PC-3 (cell line): ENCODE measurements at regions of chr7 and their contacts with region 1.

Region 1: DNA sequence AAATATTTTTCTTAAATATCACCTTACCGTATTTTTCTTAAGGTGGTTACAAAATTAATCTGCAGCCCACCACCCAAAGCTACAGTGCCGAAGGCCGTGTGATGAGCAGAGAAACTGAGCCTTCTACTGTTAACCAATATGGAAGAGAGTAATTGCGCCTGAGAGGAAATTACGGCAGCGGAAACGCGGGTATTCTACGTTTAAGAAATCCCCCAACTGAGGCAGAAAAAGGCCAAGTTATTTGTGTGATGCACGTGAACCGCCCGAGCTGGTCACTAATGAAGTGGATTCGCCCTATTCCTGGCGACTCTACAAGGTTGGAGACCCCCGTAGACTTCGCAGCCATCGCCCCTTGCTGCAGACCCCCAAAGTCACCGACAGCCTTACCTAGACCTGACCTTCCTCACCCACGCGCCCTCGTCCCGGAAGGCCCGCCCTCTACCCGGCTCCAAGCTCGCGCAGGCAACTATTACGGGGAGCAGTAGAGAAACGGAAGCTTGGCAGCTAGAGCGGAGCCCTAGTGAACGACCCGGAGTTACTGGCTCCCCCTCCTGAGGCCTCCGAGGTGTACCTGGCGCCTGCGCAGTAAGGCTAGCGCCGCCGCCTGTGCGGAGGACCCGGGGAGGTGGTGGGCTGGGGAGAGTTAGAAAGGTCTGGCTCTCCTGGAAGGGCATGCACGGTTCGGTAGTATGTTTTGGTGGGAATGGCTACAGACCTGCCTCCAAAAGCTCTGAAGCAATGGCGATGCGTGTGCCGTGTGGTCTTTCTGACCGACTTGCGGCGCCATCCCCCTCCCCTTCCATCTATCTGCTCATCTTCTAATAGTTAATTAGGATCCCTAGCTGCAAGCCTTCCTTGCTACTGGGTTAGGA is at the start of gene MRPS33:
- DNase-seq: peak; percentile 97
- ATAC-seq: peak; percentile 97
- H3K4me3 ChIP-seq: peak within 1 kb of the TSS; percentile 79
- H3K27ac ChIP-seq: peak within 1 kb of the TSS; percentile 43
- H3K4me1 ChIP-seq: peaks cover 16% of the 10 kb centered on the region
- H3K27me3 ChIP-seq: peaks cover 16% of the 10 kb centered on the region; the same call in 1 of the 2 replicates
- CTCF ChIP-seq: peak; percentile 77
- total RNA-seq, gene MRPS33: 38.5 and 57.1 TPM in 2 replicates

Region 2: DNA sequence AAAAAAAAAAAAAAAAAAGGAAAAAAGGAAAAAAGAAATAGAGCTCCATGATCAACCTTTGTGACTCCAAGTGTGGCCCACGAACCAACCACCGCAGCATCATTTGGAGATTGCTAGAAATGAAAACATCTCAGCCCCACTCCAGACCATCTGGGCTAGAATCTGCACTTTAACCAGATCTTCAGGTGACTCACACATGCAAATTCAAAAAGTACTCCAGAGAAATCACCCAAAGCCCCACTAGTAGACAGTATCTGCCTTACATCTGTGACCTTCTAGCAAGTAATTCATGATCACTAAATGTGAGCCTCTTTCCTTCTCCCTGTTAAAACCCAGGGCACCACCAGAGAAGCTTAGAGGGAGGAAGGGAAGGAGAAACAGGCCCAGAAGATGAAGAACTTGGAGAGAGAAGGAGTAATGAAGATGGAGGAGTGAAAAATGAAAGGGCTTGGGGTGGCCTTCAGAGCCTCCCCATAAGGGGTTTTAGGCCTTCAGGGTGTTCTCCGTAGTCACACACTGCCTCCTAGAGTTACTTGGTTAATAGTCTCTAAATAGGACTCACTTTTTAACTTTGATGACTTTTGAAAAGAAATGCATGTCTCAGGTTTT is 710.5 kb before region 1 on chr7:
- CTCF ChIA-PET with region 1: interaction called, 15 read pairs
- POLR2A ChIA-PET with region 1: no interaction called
- intact Hi-C with region 1: no loop called
- DNase-seq: peak; percentile 22
- ATAC-seq: peak; percentile 48
- H3K4me3 ChIP-seq: no peak overlapping the region
- H3K27ac ChIP-seq: no peak overlapping the region
- H3K4me1 ChIP-seq: no peaks in the 10 kb centered on the region
- H3K27me3 ChIP-seq: no peaks in the 10 kb centered on the region
- CTCF ChIP-seq: peak; percentile 44; the same call in 1 of the 2 replicates

Region 3: DNA sequence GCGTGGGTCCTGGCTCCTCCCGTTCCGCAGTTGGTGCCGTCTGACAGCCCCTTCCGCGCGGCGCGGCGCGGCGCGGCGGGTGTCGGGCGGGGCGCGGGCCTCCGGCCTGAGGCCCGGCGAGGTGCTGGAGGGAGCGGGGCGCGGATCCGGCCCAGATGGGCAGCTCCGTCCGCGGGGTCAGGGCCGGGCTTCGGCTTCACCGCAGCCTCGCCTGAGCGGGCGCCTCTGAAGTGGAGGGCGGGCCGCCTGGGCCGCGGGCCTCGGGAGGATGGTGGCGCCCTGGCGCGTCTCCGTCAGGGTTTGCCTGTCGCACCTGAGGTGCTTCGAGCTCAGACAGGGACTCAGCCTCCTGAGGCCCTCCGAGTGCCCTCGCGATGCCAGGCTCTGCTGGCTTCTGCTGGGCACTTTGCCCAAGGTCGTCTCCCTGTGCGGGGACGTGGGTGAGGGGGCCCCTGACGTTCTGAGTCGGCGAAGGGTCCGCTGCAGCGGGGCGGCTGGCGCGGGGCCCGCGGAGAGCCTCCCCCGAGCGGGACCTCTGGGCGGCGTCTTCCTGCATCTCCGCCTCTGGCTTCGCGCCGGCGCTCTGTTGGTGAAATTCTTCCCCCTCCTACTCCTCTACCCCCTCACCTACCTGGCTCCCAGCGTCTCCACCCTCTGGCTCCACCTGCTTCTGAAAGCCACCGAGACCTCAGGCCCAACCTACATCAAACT is 341.5 kb before region 1 on chr7:
- CTCF ChIA-PET with region 1: interaction called, 3 read pairs
- POLR2A ChIA-PET with region 1: no interaction called
- intact Hi-C with region 1: loop called (anchors 2 kb)
- DNase-seq: peak; percentile 82
- ATAC-seq: peak; percentile 71
- H3K4me3 ChIP-seq: peak overlapping the region; percentile 71
- H3K27ac ChIP-seq: peak overlapping the region; percentile 33; the same call in 1 of the 2 replicates
- H3K4me1 ChIP-seq: peaks cover 25% of the 10 kb centered on the region
- H3K27me3 ChIP-seq: no peaks in the 10 kb centered on the region
- CTCF ChIP-seq: no peak; the same call in 1 of the 2 replicates

Region 4: DNA sequence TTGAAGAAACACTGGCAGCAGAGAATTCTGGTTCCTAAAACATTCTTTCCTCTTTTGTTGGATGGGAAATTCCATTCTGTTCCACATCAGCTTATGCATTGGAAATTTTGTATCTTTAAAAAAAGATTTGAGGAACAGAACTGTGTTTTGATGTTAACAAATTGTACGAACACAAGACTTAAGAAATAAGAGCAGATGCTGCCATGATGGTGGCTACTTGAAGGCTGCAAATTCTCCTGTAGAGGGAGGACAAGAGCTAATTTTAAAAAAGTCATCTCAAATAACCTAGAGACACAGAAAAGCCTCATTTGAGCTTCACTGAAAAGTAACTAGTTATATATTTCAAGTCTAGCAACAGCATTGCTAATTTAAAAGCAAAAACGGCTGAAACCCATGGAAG is 288.5 kb before region 1 on chr7:
- CTCF ChIA-PET with region 1: no interaction called
- POLR2A ChIA-PET with region 1: interaction called, 8 read pairs
- intact Hi-C with region 1: loop called (anchors 1 kb)
- DNase-seq: peak; percentile 34
- ATAC-seq: peak; percentile 67
- H3K4me3 ChIP-seq: no peak overlapping the region
- H3K27ac ChIP-seq: no peak overlapping the region
- H3K4me1 ChIP-seq: no peaks in the 10 kb centered on the region
- H3K27me3 ChIP-seq: no peaks in the 10 kb centered on the region
- CTCF ChIP-seq: peak; percentile 67

Region 5: GRCh38 chr7:140914083-140914482 is 100.7 kb before region 1 on chr7:
- CTCF ChIA-PET with region 1: interaction called, 3 read pairs
- POLR2A ChIA-PET with region 1: no interaction called
- intact Hi-C with region 1: loop called (anchors 5 kb)
- DNase-seq: peak; percentile 20
- ATAC-seq: 0 out of 2 replicates have a peak, but pooled peaks have one; percentile 9
- H3K4me3 ChIP-seq: peak overlapping the region; percentile 30
- H3K27ac ChIP-seq: peak overlapping the region; percentile 83
- H3K4me1 ChIP-seq: peaks cover 30% of the 10 kb centered on the region
- H3K27me3 ChIP-seq: no peaks in the 10 kb centered on the region
- CTCF ChIP-seq: no peak

Region 6: GRCh38 chr7:140924019-140924820 is 90.5 kb before region 1 on chr7:
- CTCF ChIA-PET with region 1: no interaction called
- POLR2A ChIA-PET with region 1: no interaction called
- intact Hi-C with region 1: loop called (anchors 1 kb)
- DNase-seq: peak; percentile 35
- ATAC-seq: peak; percentile 67
- H3K4me3 ChIP-seq: peak overlapping the region; percentile 93
- H3K27ac ChIP-seq: peak overlapping the region; percentile 56
- H3K4me1 ChIP-seq: peaks cover 29% of the 10 kb centered on the region
- H3K27me3 ChIP-seq: no peaks in the 10 kb centered on the region
- CTCF ChIP-seq: peak; percentile 59

Region 7: DNA sequence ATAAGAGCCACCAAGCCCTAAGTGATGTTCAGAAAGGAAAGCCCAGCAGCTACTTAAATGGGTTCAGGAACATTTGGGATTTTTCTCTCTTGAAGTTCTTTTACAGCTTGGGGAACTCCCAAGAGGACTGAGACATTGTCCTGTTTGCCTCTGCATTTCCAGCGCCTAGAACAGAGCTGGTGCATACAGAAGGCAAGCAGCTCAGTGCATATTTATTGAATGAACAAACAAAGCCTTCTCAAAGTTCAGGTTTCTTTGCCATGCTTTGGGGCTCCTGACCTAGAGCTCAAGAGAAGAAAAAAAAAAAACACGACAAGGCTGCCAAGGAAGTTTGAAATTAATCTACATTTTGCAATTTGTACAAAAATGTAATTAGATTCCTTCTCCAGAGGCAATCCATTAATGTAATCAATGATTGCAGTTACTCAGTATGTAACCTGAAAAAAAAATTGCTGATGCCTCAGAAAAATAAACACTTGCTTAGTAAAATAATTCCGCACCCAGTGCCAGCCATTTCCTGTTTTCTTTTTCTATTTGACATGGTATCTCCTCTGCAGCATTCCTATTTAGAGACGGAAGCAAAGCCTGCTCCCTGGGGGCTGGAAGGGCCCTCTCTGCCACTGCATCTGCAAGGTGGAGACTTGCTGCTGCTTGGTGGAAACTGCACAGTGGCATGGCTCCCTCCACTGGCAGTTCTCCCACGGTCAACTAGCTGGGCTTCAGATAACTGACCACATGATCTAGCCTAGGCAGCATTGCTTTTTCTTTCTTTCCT is 216.4 kb after region 1 on chr7:
- CTCF ChIA-PET with region 1: no interaction called
- POLR2A ChIA-PET with region 1: no interaction called
- intact Hi-C with region 1: no loop called
- DNase-seq: peak; percentile 50
- ATAC-seq: peak; percentile 75
- H3K4me3 ChIP-seq: no peak overlapping the region
- H3K27ac ChIP-seq: no peak overlapping the region
- H3K4me1 ChIP-seq: no peaks in the 10 kb centered on the region
- H3K27me3 ChIP-seq: peaks cover 13% of the 10 kb centered on the region
- CTCF ChIP-seq: peak; percentile 52

Region 8: GRCh38 chr7:141533149-141533949 is 518.6 kb after region 1 on chr7:
- CTCF ChIA-PET with region 1: no interaction called
- POLR2A ChIA-PET with region 1: no interaction called
- intact Hi-C with region 1: loop called (anchors 2 kb)
- DNase-seq: peak; percentile 78
- ATAC-seq: peak; percentile 94
- H3K4me3 ChIP-seq: no peak overlapping the region
- H3K27ac ChIP-seq: no peak overlapping the region
- H3K4me1 ChIP-seq: no peaks in the 10 kb centered on the region
- H3K27me3 ChIP-seq: peaks cover 21% of the 10 kb centered on the region
- CTCF ChIP-seq: peak; percentile 96